ENCODE measurements at regions of chr2 and their contacts with region 1.

Region 1: GRCh38 chr2:112606488-112606902 is 22.1 kb downstream of the CHCHD5 start:
- DNase-seq: no peak
- H3K4me3 ChIP-seq: no peak overlapping the region
- H3K27ac ChIP-seq: no peak overlapping the region
- H3K4me1 ChIP-seq: no peaks in the 10 kb centered on the region
- H3K27me3 ChIP-seq: no peaks in the 10 kb centered on the region
- CTCF ChIP-seq: no peak
- EP300 ChIP-seq: no peak
- POLR2A ChIP-seq: no peak

Region 2: GRCh38 chr2:112645310-112646101 is 39.0 kb after region 1 on chr2 and contains the start of gene SLC20A1:
- intact Hi-C with region 1: loop called (anchors 5 kb)
- DNase-seq: peak; percentile 97
- H3K4me3 ChIP-seq: peak within 1 kb of the TSS; percentile 89 to 97 (median 93)
- H3K27ac ChIP-seq: peak within 1 kb of the TSS; percentile 98 to 100 (median 99)
- H3K4me1 ChIP-seq: peaks cover 35 to 54% (median 49%) of the 10 kb centered on the region in 4 donors
- H3K27me3 ChIP-seq: no peaks in the 10 kb centered on the region
- CTCF ChIP-seq: peak in 1 of 3 experiments; percentile 38
- EP300 ChIP-seq: no peak
- POLR2A ChIP-seq: peak; percentile 94
- total RNA-seq, gene SLC20A1: 12.0 to 34.1 (median 14.9) TPM

Measured in esophagus muscularis mucosa (tissue), 4 donors.